Prostate gland (tissue), 2 donors: ENCODE measurements at regions of chr16 and their contacts with region 1.

Region 1: DNA sequence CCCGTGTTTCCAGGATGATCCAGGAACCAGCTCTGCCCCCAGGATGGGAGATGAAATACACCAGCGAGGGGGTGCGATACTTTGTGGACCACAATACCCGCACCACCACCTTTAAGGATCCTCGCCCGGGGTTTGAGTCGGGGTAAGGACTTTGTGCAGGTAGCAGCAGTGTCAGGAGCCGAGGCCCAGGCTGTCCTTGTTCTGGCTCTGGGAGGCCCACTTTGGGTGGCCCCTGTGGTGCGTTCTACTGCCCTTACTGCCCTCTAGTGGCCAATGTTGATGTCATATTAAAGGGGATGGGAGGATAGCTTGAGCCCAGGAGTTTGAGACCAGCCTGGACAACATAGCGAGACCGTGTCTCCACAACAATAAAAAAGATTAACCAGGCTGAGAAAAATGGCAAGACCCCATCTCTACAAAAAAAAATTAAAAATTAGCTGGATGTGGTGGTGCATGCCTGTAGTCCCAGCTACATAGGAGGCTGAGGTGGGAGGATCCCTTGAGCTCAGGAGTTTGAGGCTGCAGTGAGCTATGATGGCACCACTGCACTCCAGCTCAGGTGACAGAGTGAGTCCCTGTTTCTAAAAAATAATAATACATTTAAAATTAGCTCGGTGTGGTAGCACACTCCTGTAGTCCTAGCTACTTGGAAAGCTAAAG is 20.9 kb upstream of the CLEC18A start:
- DNase-seq: peak; percentile 43
- H3K4me3 ChIP-seq: no peak overlapping the region
- H3K27ac ChIP-seq: no peak overlapping the region
- H3K4me1 ChIP-seq: no peaks in the 10 kb centered on the region
- H3K27me3 ChIP-seq: no peaks in the 10 kb centered on the region
- CTCF ChIP-seq: peak; percentile 26 to 84 (median 76)
- POLR2A ChIP-seq: no peak

Region 2: GRCh38 chr16:69796351-69797118 is 133.7 kb before region 1 on chr16:
- intact Hi-C with region 1: loop called (anchors 2 kb)
- DNase-seq: peak; percentile 36
- H3K4me3 ChIP-seq: no peak overlapping the region
- H3K27ac ChIP-seq: no peak overlapping the region
- H3K4me1 ChIP-seq: no peaks in the 10 kb centered on the region
- H3K27me3 ChIP-seq: no peaks in the 10 kb centered on the region
- CTCF ChIP-seq: peak; percentile 80 to 94 (median 90)
- POLR2A ChIP-seq: no peak

Region 3: GRCh38 chr16:70018254-70018653 is 88.0 kb after region 1 on chr16:
- intact Hi-C with region 1: no loop called
- DNase-seq: peak; percentile 5
- H3K4me3 ChIP-seq: no peak overlapping the region
- H3K27ac ChIP-seq: no peak overlapping the region
- H3K4me1 ChIP-seq: no peaks in the 10 kb centered on the region
- H3K27me3 ChIP-seq: no peaks in the 10 kb centered on the region
- CTCF ChIP-seq: peak in 1 of 4 experiments; percentile 24
- POLR2A ChIP-seq: no peak